Calu3 (cell line): ENCODE measurements at regions of chr11 and their contacts with region 1.

Region 1: DNA sequence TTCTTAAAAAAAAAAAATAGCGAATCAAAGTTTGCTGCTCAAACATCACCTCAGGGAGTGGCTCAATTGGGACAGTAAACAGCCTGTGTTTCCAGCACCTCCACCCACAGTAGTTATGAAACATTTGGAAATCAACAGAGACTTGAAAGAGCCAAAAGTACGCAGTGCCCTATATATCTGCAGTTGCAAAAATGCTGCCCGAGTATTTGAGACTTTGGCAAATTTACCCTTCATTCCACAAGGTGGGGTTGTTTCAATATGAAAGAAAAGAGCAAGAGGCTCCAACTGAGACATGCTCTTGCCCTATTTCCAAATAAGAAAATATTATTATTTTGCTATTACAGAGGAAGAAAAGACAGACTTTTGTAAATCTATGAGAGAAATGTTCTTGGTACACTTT is 851.1 kb upstream of the RAG2 start:
- DNase-seq: peak; percentile 26
- H3K4me3 Mint-ChIP-seq: no peak overlapping the region
- H3K27ac Mint-ChIP-seq: no peak overlapping the region
- H3K4me1 Mint-ChIP-seq: peaks cover 34% of the 10 kb centered on the region
- H3K27me3 Mint-ChIP-seq: no peaks in the 10 kb centered on the region
- CTCF ChIP-seq: peak; percentile 47

Region 2: DNA sequence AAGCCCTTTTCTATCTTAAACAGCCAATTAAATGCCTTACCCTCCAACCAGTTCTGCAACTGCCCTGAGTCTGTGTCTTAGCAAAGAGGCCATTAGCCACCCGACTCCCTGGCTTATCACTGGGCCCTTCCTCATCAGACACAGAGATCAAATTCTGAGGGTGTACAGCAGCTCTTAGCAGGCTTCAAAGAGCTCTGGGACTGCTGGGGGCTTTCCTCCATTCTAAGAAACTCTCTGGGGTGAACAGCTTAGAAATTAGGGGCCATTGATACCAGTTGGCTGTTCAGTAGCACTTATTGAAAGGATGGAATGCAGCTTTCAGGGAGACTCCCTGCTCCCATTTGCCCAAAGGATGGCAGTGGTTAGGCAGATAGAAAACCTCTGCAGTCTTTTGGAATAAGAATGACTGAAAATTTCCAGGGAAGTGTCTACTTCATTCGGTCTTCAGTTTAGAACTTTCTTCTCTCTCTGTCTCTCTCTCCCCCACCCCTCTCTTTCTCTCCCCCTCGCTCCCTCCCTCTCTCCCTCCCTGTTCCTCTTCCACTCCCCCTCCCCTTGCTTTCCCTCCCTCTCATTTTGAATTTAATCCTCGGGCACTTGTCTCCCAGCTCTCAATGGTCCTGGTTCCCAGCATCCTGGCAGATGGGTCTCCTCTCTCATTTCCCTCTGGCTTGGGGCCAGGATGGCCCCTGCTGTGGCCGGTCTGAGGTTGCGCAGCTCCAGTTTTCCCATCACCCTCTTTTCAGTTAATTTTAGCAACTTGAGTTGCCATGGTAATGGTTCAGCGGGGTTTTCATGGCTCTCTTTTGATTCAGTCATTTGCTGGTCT is 1236.4 kb before region 1 on chr11:
- CTCF ChIA-PET with region 1: no interaction called
- intact Hi-C with region 1: no loop called
- DNase-seq: no peak
- H3K4me3 Mint-ChIP-seq: no peak overlapping the region
- H3K27ac Mint-ChIP-seq: no peak overlapping the region
- H3K4me1 Mint-ChIP-seq: peaks cover 14% of the 10 kb centered on the region
- H3K27me3 Mint-ChIP-seq: no peaks in the 10 kb centered on the region
- CTCF ChIP-seq: no peak

Region 3: DNA sequence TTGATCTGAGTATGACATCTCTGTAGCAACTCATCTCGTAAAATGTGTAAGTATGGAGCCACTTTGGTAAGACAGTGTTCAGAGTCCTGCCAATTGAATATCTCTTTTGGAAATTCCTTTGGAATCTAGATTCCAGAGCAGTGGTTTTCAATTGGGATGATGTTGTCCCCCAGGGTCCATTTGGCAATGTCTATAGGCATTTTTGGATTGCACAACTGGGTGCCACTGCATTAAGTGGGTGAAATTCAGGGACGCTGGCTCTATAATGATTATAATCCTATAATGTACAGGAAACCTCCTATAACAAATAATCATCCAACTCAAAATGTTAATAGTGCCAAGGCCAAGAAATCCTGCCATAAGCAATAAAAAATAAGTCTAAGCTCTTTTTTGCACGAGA is 446.3 kb before region 1 on chr11:
- CTCF ChIA-PET with region 1: no interaction called
- intact Hi-C with region 1: loop called (anchors 5 kb)
- DNase-seq: no peak
- H3K4me3 Mint-ChIP-seq: no peak overlapping the region
- H3K27ac Mint-ChIP-seq: no peak overlapping the region
- H3K4me1 Mint-ChIP-seq: no peaks in the 10 kb centered on the region
- H3K27me3 Mint-ChIP-seq: no peaks in the 10 kb centered on the region
- CTCF ChIP-seq: no peak

Region 4: DNA sequence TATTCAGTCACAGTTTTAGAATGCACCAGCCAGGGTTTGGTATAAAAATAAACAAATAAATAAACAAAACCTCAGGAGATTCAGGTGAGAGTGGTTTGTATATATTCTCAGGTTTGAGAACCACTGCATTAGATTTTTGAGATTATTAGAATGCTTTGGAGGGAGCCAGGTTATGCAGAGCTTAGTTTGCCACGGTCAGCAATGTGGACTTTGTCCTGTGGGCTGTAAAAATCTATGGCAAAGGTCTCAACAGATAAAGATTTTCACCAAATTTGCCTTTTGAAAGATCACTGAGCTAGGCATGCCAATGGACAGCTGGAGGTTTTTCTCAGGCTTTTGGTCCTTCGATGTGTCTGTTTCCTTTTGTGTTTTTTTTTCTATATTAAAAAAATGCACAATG is 201.0 kb before region 1 on chr11:
- CTCF ChIA-PET with region 1: no interaction called
- intact Hi-C with region 1: no loop called
- DNase-seq: no peak
- H3K4me3 Mint-ChIP-seq: no peak overlapping the region
- H3K27ac Mint-ChIP-seq: no peak overlapping the region
- H3K4me1 Mint-ChIP-seq: no peaks in the 10 kb centered on the region
- H3K27me3 Mint-ChIP-seq: no peaks in the 10 kb centered on the region
- CTCF ChIP-seq: no peak

Region 5: DNA sequence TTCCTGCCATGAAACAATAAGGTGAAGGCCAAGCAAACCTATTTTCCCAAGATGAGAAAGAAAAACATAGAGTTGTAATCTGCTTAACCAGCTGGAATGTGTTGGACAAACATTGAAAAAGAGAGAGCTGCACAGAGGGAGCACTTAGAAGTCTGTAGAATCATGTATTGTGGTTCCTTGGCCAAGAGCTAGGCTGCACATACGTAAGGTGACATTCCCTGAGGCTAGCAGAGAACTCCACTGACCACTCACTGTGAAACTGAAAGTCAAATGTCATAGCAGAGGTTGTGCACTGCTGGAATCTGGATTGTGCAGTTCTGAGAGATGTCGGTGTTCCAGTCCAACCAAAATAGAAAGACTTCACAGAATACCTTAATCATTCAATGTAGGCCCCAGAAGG is 78.4 kb before region 1 on chr11:
- CTCF ChIA-PET with region 1: no interaction called
- intact Hi-C with region 1: no loop called
- DNase-seq: no peak
- H3K4me3 Mint-ChIP-seq: no peak overlapping the region
- H3K27ac Mint-ChIP-seq: no peak overlapping the region
- H3K4me1 Mint-ChIP-seq: no peaks in the 10 kb centered on the region
- H3K27me3 Mint-ChIP-seq: no peaks in the 10 kb centered on the region
- CTCF ChIP-seq: no peak

Region 6: GRCh38 chr11:37394236-37394870 is 54.8 kb before region 1 on chr11:
- CTCF ChIA-PET with region 1: no interaction called
- intact Hi-C with region 1: no loop called
- DNase-seq: no peak
- H3K4me3 Mint-ChIP-seq: no peak overlapping the region
- H3K27ac Mint-ChIP-seq: no peak overlapping the region
- H3K4me1 Mint-ChIP-seq: no peaks in the 10 kb centered on the region
- H3K27me3 Mint-ChIP-seq: no peaks in the 10 kb centered on the region
- CTCF ChIP-seq: no peak

Region 7: GRCh38 chr11:37525336-37525735 is 76.2 kb after region 1 on chr11:
- CTCF ChIA-PET with region 1: no interaction called
- intact Hi-C with region 1: loop called (anchors 1 kb)
- DNase-seq: no peak
- H3K4me3 Mint-ChIP-seq: no peak overlapping the region
- H3K27ac Mint-ChIP-seq: no peak overlapping the region
- H3K4me1 Mint-ChIP-seq: no peaks in the 10 kb centered on the region
- H3K27me3 Mint-ChIP-seq: no peaks in the 10 kb centered on the region
- CTCF ChIP-seq: no peak

Region 8: GRCh38 chr11:37946155-37946766 is 497.1 kb after region 1 on chr11:
- CTCF ChIA-PET with region 1: no interaction called
- intact Hi-C with region 1: loop called (anchors 10 kb)
- DNase-seq: peak; percentile 62
- H3K4me3 Mint-ChIP-seq: no peak overlapping the region
- H3K27ac Mint-ChIP-seq: no peak overlapping the region
- H3K4me1 Mint-ChIP-seq: no peaks in the 10 kb centered on the region
- H3K27me3 Mint-ChIP-seq: no peaks in the 10 kb centered on the region
- CTCF ChIP-seq: peak; percentile 72